AG04449 (cell line): ENCODE measurements at regions of chr13 and their contacts with region 1.

Region 1: GRCh38 chr13:27362064-27362883 is 62.1 kb upstream of the GTF3A start:
- DNase-seq: no peak
- H3K4me3 ChIP-seq: peak overlapping the region; percentile 64
- CTCF ChIP-seq: peak; percentile 97

Region 2: DNA sequence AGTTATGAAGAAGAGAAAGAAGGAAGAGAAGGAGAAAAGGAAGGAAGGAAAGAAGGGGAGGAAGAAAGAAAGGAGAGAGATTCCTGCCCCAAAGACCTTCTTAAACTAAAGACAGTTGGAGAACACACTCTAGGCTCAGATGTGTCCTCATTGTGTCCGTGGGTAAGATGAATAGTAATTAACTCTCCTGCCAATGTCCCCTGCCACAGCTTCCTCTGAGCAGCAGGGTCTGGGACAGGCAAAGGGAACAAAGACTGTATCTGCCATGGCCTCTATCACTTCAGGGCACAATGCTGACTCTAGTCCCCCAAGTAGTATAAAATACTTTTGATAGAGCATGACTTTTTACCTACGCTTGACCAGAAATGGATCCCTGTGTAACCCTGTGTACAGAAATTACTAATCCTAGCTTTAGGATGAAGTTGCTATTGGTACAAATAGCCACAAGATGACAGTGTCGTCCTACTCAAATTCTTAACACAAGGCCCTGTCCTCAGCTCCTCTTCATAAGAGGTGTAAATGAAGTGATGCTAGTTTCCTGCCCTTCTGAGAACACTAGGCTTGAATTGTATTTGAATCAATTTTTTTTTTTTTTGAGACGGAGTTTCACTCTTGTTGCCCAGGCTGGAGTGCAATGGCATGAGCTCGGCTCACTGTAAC is 415.5 kb before region 1 on chr13:
- CTCF ChIA-PET with region 1: interaction called, 228 read pairs
- POLR2A ChIA-PET with region 1: no interaction called
- DNase-seq: no peak
- H3K4me3 ChIP-seq: no peak overlapping the region
- CTCF ChIP-seq: peak; percentile 57

Region 3: GRCh38 chr13:26977556-26977955 is 384.7 kb before region 1 on chr13:
- CTCF ChIA-PET with region 1: interaction called, 457 read pairs
- POLR2A ChIA-PET with region 1: no interaction called
- DNase-seq: no peak
- H3K4me3 ChIP-seq: no peak overlapping the region
- CTCF ChIP-seq: no peak

Region 4: GRCh38 chr13:27339299-27339698 is 23.0 kb before region 1 on chr13:
- CTCF ChIA-PET with region 1: interaction called, 16 read pairs
- POLR2A ChIA-PET with region 1: no interaction called
- DNase-seq: no peak
- H3K4me3 ChIP-seq: no peak overlapping the region
- CTCF ChIP-seq: peak; percentile 63

Region 5: DNA sequence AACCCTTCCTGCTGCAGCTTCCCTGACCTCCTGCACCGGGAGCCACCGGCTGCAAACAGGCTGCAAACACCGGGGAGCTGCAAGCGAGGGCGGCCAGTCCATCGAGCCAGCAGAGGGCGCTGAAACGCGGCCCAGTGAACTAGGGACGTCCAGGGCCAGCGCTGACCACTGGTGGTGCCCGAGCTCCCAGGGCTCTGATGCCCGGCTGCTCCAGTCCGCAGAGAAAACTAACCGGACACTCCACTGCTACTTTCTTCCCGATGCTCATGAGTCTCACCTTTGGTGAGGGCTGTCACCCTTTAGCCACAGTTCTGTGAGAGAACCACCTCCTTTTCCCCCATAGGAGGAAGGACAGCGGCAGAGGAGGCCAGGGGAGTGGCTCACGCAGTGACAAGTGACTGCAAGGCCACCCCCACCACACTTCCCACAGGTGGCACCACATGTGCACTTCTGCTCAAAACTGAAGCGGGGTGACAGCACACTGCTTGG is 170.9 kb after region 1 on chr13:
- CTCF ChIA-PET with region 1: interaction called, 21 read pairs
- POLR2A ChIA-PET with region 1: no interaction called
- DNase-seq: no peak
- H3K4me3 ChIP-seq: peak overlapping the region; percentile 20
- CTCF ChIP-seq: peak; percentile 99

Region 6: GRCh38 chr13:27977476-27978300 is 615.4 kb after region 1 on chr13:
- CTCF ChIA-PET with region 1: interaction called, 229 read pairs
- POLR2A ChIA-PET with region 1: no interaction called
- DNase-seq: no peak
- H3K4me3 ChIP-seq: no peak overlapping the region
- CTCF ChIP-seq: no peak